ENCODE measurements at regions of chr15 and their contacts with region 1.

Region 1: DNA sequence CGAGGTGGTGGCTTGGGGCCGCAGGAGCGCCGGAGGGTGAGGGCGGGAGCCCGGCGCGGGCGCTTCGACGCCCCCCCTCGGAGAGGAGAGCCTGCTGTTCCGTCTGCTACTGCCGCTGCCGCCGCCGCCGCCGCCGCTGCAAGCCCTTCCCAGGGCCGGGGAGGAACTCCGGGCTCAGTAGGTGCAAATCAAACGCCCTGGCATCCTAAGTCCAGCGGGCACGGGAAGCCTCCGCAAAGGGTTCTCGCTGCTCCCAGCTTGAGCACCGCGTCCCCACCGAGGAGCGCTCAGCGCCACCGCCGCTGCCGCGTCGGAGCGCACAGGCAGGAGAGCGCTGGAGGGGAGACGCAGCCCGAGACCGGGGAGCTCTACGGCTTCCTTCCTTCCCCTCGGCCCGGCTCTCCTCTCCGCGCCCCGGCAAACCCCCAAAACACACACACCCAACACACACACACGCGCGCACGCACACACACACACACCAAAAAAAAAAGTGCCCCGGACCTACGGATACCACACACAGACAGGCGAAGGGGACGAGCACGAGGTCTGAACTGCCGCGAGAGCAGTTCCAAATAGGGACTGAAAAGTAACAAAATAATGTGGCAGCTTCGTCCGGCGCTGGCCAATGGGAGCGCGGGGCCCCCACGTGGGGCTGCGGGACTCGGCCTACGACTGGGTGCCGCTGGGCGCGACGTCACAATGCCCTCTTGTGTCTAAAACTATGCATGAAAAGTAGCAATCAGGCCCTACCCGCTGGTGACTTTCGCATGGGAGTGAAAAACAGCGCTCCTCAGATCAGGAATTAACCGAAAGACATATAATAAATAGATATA is at the start of gene TLE3:
- DNase-seq: peak; percentile 99
- H3K4me3 Mint-ChIP-seq: peak within 1 kb of the TSS; percentile 100
- H3K27ac Mint-ChIP-seq: peak within 1 kb of the TSS; percentile 99
- H3K4me1 Mint-ChIP-seq: peaks cover 43% of the 10 kb centered on the region
- H3K27me3 Mint-ChIP-seq: peaks cover 16% of the 10 kb centered on the region
- total RNA-seq, gene TLE3: 111 and 118 TPM in 2 replicates

Region 2: GRCh38 chr15:69160141-69160993 is 937.2 kb before region 1 on chr15 and contains the start of gene GLCE:
- intact Hi-C with region 1: loop called (anchors 10 kb)
- DNase-seq: peak; percentile 99
- H3K4me3 Mint-ChIP-seq: peak within 1 kb of the TSS; percentile 95
- H3K27ac Mint-ChIP-seq: peak within 1 kb of the TSS; percentile 77
- H3K4me1 Mint-ChIP-seq: peaks cover 20% of the 10 kb centered on the region
- H3K27me3 Mint-ChIP-seq: peaks cover 47% of the 10 kb centered on the region
- total RNA-seq, gene GLCE: 2.5 and 3.8 TPM in 2 replicates

Region 3: GRCh38 chr15:69468241-69469121 is 629.1 kb before region 1 on chr15:
- intact Hi-C with region 1: loop called (anchors 2 kb)
- DNase-seq: peak; percentile 93
- H3K4me3 Mint-ChIP-seq: peak overlapping the region; percentile 51
- H3K27ac Mint-ChIP-seq: peak overlapping the region; percentile 79
- H3K4me1 Mint-ChIP-seq: peaks cover 24% of the 10 kb centered on the region
- H3K27me3 Mint-ChIP-seq: peaks cover 17% of the 10 kb centered on the region

Region 4: DNA sequence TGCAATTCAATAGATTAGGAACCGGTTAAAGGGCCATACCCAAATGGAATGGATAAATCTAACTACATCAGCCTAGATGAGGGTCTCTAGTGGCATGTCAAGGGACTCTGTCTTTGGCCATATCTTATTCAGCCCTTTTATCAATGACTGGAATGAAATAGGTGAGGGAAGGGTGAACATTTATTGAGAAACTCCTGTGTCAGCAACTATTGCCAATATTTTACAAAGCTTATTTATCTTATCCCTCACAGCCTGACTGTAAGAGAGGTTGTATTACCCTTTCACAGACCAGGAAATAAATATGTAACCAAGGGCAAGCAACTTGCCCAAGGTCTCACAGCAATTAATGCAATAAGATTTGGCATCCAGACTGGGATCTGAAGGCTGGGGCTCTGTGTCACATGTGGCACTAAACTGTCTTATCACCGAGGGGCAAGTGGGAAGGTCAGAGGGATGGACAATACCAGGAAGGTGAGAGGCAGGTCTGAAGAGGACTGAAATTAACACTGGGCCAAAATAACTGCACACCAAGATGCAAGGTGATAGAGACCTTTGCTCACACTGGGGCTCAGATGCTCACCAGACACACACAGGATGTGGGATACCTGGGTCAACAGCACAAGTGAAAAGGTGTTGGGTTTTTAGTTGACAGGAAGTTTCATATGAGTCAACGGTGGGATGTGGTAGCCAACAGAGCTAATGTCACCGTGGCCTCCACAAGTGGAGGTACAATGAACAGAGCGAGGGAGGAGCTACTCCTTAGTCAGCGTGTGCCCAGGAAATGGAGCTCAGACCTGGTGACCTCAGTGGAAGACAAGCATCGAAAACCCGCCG is 383.6 kb before region 1 on chr15:
- intact Hi-C with region 1: loop called (anchors 2 kb)
- DNase-seq: peak; percentile 94
- H3K4me3 Mint-ChIP-seq: peak overlapping the region; percentile 61
- H3K27ac Mint-ChIP-seq: peak overlapping the region; percentile 84
- H3K4me1 Mint-ChIP-seq: peaks cover 52% of the 10 kb centered on the region
- H3K27me3 Mint-ChIP-seq: peaks cover 16% of the 10 kb centered on the region

Region 5: GRCh38 chr15:69755551-69756310 is 341.8 kb before region 1 on chr15:
- intact Hi-C with region 1: loop called (anchors 1 kb)
- DNase-seq: peak; percentile 94
- H3K4me3 Mint-ChIP-seq: peak overlapping the region; percentile 69
- H3K27ac Mint-ChIP-seq: peak overlapping the region; percentile 87
- H3K4me1 Mint-ChIP-seq: peaks cover 67% of the 10 kb centered on the region
- H3K27me3 Mint-ChIP-seq: peaks cover 2% of the 10 kb centered on the region

Region 6: GRCh38 chr15:70121624-70122297 is 24.2 kb after region 1 on chr15:
- intact Hi-C with region 1: no loop called
- DNase-seq: no peak
- H3K4me3 Mint-ChIP-seq: no peak overlapping the region
- H3K27ac Mint-ChIP-seq: no peak overlapping the region
- H3K4me1 Mint-ChIP-seq: peaks cover 2% of the 10 kb centered on the region
- H3K27me3 Mint-ChIP-seq: peaks cover 37% of the 10 kb centered on the region

Region 7: GRCh38 chr15:70140543-70141375 is 43.2 kb after region 1 on chr15:
- intact Hi-C with region 1: loop called (anchors 1 kb)
- DNase-seq: peak; percentile 78
- H3K4me3 Mint-ChIP-seq: peak overlapping the region; percentile 3
- H3K27ac Mint-ChIP-seq: peak overlapping the region; percentile 59
- H3K4me1 Mint-ChIP-seq: peaks cover 28% of the 10 kb centered on the region
- H3K27me3 Mint-ChIP-seq: peaks cover 38% of the 10 kb centered on the region

Region 8: GRCh38 chr15:70512772-70513362 is 415.3 kb after region 1 on chr15:
- intact Hi-C with region 1: loop called (anchors 1 kb)
- DNase-seq: peak; percentile 91
- H3K4me3 Mint-ChIP-seq: no peak overlapping the region
- H3K27ac Mint-ChIP-seq: no peak overlapping the region
- H3K4me1 Mint-ChIP-seq: peaks cover 31% of the 10 kb centered on the region
- H3K27me3 Mint-ChIP-seq: peaks cover 31% of the 10 kb centered on the region